CD4-positive, alpha-beta T cell (primary cell): ENCODE measurements at regions of chr6 and their contacts with region 1.

Region 1: GRCh38 chr6:117674991-117675657 is at the start of gene NUS1:
- DNase-seq: peak; percentile 95 to 99 (median 98)
- ATAC-seq: peak; percentile 96
- H3K4me3 ChIP-seq: peak within 1 kb of the TSS; percentile 69
- H3K4me3 Mint-ChIP-seq: peak within 1 kb of the TSS; percentile 99
- H3K27ac ChIP-seq: peak within 1 kb of the TSS; percentile 44 to 53
- H3K27ac Mint-ChIP-seq: peak within 1 kb of the TSS; percentile 96
- H3K4me1 ChIP-seq: peaks cover 29% of the 10 kb centered on the region
- H3K4me1 Mint-ChIP-seq: peaks cover 56% of the 10 kb centered on the region
- H3K27me3 ChIP-seq: no peaks in the 10 kb centered on the region
- H3K27me3 Mint-ChIP-seq: no peaks in the 10 kb centered on the region
- CTCF ChIP-seq: peak; percentile 86
- total RNA-seq, gene NUS1: 16.2 to 16.6 TPM

Region 2: DNA sequence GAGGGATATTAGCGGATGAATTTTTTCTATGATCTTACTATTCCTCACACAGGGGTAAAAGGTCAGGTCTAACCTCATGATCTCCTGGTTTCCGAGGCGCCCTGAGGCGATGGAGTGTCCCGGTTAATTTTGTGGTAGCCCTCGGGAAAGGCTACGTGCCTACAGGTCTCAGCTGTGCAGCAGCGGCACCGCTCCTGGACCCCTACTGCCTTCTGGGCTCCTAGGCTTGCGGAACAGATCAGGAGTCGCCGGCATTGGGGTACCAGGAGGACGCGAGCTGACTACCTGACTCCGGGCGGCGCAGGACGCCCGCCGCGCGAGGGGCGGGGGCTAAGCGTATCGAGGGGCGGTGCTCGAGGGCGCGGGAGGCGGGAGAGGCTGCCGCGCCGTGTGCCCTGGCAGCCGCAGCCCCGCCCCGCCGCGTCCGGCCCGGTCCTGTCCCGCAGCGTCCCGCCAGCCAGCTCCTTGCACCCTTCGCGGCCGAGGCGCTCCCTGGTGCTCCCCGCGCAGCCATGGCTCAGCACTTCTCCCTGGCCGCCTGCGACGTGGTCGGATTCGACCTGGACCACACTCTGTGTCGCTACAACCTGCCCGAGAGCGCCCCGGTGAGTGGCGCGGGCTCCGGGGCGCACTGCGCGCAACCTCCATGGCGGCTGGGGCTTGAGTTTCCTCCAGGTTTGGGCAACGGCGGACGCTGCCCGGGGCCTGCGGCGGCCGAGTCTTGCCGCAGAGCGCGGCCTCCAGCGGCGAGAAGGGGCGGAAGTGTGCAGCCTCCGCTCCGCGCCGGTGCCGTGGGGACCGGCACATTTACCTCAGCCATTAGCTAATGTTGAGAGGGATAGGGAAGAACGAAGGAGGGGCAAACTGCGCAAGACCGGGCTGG is 1574.5 kb before region 1 on chr6 and contains the start of gene NT5DC1:
- CTCF ChIA-PET with region 1: no interaction called
- POLR2A ChIA-PET with region 1: no interaction called
- intact Hi-C with region 1: loop called in 1 of 2 experiments (anchors 10 kb)
- DNase-seq: peak; percentile 65 to 92 (median 82)
- ATAC-seq: peak; percentile 92
- H3K4me3 ChIP-seq: peak within 1 kb of the TSS; percentile 67
- H3K4me3 Mint-ChIP-seq: peak within 1 kb of the TSS; percentile 99
- H3K27ac ChIP-seq: peak within 1 kb of the TSS; percentile 69 to 75
- H3K27ac Mint-ChIP-seq: peak within 1 kb of the TSS; percentile 80
- H3K4me1 ChIP-seq: peaks cover 26% of the 10 kb centered on the region
- H3K4me1 Mint-ChIP-seq: peaks cover 58% of the 10 kb centered on the region
- H3K27me3 ChIP-seq: no peaks in the 10 kb centered on the region
- H3K27me3 Mint-ChIP-seq: no peaks in the 10 kb centered on the region
- CTCF ChIP-seq: peak; percentile 52
- total RNA-seq, gene NT5DC1: 24.2 to 27.2 TPM

Region 3: DNA sequence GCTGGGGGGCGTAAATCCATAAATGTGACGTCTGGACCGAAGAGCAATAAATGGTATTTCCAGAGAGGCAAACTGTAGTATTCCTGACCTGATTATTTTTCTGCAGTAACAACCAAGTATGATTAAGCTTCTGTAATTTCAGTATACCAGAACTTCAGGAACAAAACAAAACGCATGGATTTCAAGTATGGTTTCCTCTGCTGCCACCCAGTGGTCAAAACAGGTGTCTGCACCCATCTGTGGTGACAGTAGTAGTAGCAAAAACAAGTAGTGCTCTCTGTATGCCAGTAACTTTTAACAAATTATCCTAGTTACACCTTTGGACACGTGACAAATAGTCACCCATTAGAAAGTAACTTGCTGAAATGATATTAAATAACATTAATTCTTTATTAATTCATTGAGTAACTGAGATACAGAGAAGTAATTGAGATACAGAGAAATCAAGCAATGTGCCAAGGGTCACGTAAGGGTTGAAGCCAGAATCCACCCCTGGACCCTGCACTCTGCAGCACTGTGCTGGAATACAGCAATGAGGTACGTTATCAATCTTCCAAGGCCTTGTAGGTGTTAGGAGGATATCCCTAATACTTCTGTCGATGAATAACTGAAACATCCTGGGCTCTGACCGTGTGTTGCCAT is 1113.6 kb before region 1 on chr6:
- CTCF ChIA-PET with region 1: no interaction called
- POLR2A ChIA-PET with region 1: no interaction called
- intact Hi-C with region 1: loop called in 1 of 2 experiments (anchors 10 kb)
- DNase-seq: peak; percentile 39 to 82 (median 55)
- ATAC-seq: peak; percentile 85
- H3K4me3 ChIP-seq: no peak overlapping the region
- H3K4me3 Mint-ChIP-seq: no peak overlapping the region
- H3K27ac ChIP-seq: no peak overlapping the region
- H3K27ac Mint-ChIP-seq: no peak overlapping the region
- H3K4me1 ChIP-seq: peaks cover 8% of the 10 kb centered on the region
- H3K4me1 Mint-ChIP-seq: no peaks in the 10 kb centered on the region
- H3K27me3 ChIP-seq: peaks cover 0 to 14% of the 10 kb centered on the region in 2 experiments
- H3K27me3 Mint-ChIP-seq: peaks cover 10% of the 10 kb centered on the region
- CTCF ChIP-seq: peak; percentile 98

Region 4: GRCh38 chr6:117346142-117346930 is 328.8 kb before region 1 on chr6:
- CTCF ChIA-PET with region 1: no interaction called
- POLR2A ChIA-PET with region 1: no interaction called
- intact Hi-C with region 1: loop called in 1 of 2 experiments (anchors 10 kb)
- DNase-seq: peak in 3 of 14 experiments; percentile 16 to 30 (median 19)
- ATAC-seq: no peak
- H3K4me3 ChIP-seq: no peak overlapping the region
- H3K4me3 Mint-ChIP-seq: no peak overlapping the region
- H3K27ac ChIP-seq: no peak overlapping the region
- H3K27ac Mint-ChIP-seq: no peak overlapping the region
- H3K4me1 ChIP-seq: no peaks in the 10 kb centered on the region
- H3K4me1 Mint-ChIP-seq: no peaks in the 10 kb centered on the region
- H3K27me3 ChIP-seq: peaks cover 0 to 4% of the 10 kb centered on the region in 2 experiments
- H3K27me3 Mint-ChIP-seq: peaks cover 4% of the 10 kb centered on the region
- CTCF ChIP-seq: peak; percentile 65

Region 5: DNA sequence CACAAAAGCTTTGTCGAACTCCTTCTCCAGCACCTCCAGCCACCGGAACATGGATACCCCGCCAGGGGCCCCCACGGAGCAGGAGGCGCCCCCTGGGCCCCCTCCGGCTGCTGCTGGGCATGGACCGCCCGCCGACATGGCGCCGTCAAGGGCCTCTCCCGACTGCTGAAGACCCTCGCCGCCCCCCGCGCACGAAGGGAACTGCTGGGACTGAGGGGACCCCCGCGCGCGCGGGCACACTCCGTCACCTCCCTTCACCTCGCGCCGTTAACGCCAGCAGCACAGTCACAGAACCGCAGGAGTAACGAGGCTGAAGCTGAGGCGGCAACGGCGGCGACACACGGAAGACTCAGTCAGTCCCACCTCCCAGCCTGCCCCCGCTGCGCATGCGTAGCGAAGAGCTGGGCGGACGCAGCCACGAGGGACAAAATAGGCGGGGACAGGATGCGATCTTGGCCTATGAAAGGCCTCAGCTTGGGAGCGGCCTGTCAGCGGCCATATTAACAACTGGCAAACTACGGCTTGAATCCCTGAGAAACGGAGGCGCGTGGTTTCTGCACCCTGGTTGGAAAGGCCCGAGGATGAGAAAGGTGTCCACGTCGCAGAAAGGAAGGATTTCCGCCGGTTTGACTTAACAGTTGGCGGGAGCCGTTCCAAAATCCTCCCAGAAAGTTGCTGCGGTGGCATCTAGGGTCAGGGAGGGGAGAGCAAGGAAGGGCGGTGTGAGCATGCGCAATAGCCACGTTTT is 72.8 kb before region 1 on chr6 and contains the start of gene GOPC:
- CTCF ChIA-PET with region 1: interaction called, 5 read pairs
- POLR2A ChIA-PET with region 1: interaction called, 5 read pairs
- intact Hi-C with region 1: loop called (anchors 1 to 2 kb)
- DNase-seq: peak; percentile 87 to 100 (median 94)
- ATAC-seq: peak; percentile 96
- H3K4me3 ChIP-seq: peak within 1 kb of the TSS; percentile 94
- H3K4me3 Mint-ChIP-seq: peak within 1 kb of the TSS; percentile 99
- H3K27ac ChIP-seq: peak within 1 kb of the TSS; percentile 82 to 86
- H3K27ac Mint-ChIP-seq: peak within 1 kb of the TSS; percentile 92
- H3K4me1 ChIP-seq: peaks cover 15% of the 10 kb centered on the region
- H3K4me1 Mint-ChIP-seq: peaks cover 52% of the 10 kb centered on the region
- H3K27me3 ChIP-seq: no peaks in the 10 kb centered on the region
- H3K27me3 Mint-ChIP-seq: no peaks in the 10 kb centered on the region
- CTCF ChIP-seq: no peak
- total RNA-seq, gene GOPC: 9.7 to 10.8 TPM

Region 6: DNA sequence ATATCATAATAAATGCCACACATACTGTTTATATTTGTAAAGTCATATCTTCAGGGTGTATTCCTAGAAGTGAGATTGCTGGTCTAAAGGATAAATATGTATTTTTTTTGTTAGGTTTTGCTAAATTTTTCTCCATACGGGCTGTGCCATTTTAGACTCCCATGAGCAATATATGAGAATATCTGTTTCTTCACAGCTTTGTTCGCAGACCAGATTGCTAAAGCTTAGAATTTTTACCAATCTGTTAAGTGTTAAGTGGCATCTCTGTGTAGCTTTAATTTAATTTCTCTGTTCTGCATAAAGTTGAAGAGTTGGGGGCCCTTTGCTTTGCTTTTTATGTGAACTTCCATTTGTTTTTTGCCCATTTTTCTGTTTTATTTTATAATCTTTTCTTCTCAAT is 32.1 kb before region 1 on chr6:
- CTCF ChIA-PET with region 1: no interaction called
- POLR2A ChIA-PET with region 1: no interaction called
- intact Hi-C with region 1: no loop called
- DNase-seq: no peak
- ATAC-seq: no peak
- H3K4me3 ChIP-seq: no peak overlapping the region
- H3K4me3 Mint-ChIP-seq: no peak overlapping the region
- H3K27ac ChIP-seq: no peak overlapping the region
- H3K27ac Mint-ChIP-seq: no peak overlapping the region
- H3K4me1 ChIP-seq: no peaks in the 10 kb centered on the region
- H3K4me1 Mint-ChIP-seq: no peaks in the 10 kb centered on the region
- H3K27me3 ChIP-seq: no peaks in the 10 kb centered on the region
- H3K27me3 Mint-ChIP-seq: peaks cover 8% of the 10 kb centered on the region
- CTCF ChIP-seq: no peak

Region 7: GRCh38 chr6:118893807-118894424 is 1218.8 kb after region 1 on chr6 and contains the start of gene ASF1A:
- CTCF ChIA-PET with region 1: no interaction called
- POLR2A ChIA-PET with region 1: no interaction called
- intact Hi-C with region 1: loop called in 1 of 2 experiments (anchors 10 kb)
- DNase-seq: peak; percentile 92 to 99 (median 95)
- ATAC-seq: peak; percentile 76
- H3K4me3 ChIP-seq: peak within 1 kb of the TSS; percentile 94
- H3K4me3 Mint-ChIP-seq: peak within 1 kb of the TSS; percentile 99
- H3K27ac ChIP-seq: peak within 1 kb of the TSS; percentile 91 to 93
- H3K27ac Mint-ChIP-seq: peak within 1 kb of the TSS; percentile 98
- H3K4me1 ChIP-seq: peaks cover 36% of the 10 kb centered on the region
- H3K4me1 Mint-ChIP-seq: peaks cover 80% of the 10 kb centered on the region
- H3K27me3 ChIP-seq: no peaks in the 10 kb centered on the region
- H3K27me3 Mint-ChIP-seq: no peaks in the 10 kb centered on the region
- CTCF ChIP-seq: peak; percentile 17
- total RNA-seq, gene ASF1A: 10.7 to 11.9 TPM

Region 8: DNA sequence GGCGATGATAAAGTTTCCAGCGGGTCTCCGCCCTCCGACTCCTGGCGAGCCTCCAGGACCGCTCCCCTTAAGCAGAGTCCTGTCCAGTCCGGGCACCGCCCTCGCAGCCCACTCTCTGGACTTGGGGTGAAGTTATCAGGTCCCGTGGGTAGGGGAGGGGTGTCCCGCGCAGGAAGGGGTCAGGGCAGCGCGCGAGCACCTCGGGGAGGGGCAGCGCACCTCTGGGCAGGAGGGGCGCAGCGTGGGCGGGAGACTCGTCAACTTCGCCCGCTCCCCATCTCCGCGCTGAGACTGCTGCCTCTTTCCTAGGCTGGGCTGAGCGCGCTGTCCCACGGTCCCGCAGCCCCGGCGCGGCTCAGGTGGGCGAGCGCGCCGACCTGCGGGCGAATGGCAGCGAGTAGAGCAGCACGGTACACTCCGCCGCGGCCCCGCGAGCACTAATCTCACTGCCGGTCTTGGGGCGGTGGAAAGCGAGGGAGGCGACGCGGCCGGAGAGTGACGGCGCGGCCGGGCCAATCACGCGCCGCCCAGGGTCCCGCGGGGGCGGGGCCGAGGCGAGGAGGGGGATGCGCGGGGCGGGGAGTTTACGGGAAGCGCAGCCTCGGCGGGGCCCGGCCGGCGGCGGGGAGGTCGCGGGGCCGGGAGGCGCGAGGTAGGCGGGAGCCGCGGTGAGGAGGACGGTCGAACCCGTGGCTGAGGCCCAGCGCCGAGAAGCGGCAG is 1674.4 kb after region 1 on chr6 and contains the start of gene MAN1A1:
- CTCF ChIA-PET with region 1: no interaction called
- POLR2A ChIA-PET with region 1: no interaction called
- intact Hi-C with region 1: loop called in 1 of 2 experiments (anchors 10 kb)
- DNase-seq: peak; percentile 74 to 95 (median 86)
- ATAC-seq: peak; percentile 86
- H3K4me3 ChIP-seq: peak within 1 kb of the TSS; percentile 96
- H3K4me3 Mint-ChIP-seq: peak within 1 kb of the TSS; percentile 89
- H3K27ac ChIP-seq: peak within 1 kb of the TSS; percentile 67 to 84
- H3K27ac Mint-ChIP-seq: peak within 1 kb of the TSS; percentile 85
- H3K4me1 ChIP-seq: peaks cover 20% of the 10 kb centered on the region
- H3K4me1 Mint-ChIP-seq: peaks cover 65% of the 10 kb centered on the region
- H3K27me3 ChIP-seq: no peaks in the 10 kb centered on the region
- H3K27me3 Mint-ChIP-seq: no peaks in the 10 kb centered on the region
- CTCF ChIP-seq: no peak
- total RNA-seq, gene MAN1A1: 4.5 to 4.9 TPM